ENCODE measurements at regions of chr20 and their contacts with region 1.

Region 1: DNA sequence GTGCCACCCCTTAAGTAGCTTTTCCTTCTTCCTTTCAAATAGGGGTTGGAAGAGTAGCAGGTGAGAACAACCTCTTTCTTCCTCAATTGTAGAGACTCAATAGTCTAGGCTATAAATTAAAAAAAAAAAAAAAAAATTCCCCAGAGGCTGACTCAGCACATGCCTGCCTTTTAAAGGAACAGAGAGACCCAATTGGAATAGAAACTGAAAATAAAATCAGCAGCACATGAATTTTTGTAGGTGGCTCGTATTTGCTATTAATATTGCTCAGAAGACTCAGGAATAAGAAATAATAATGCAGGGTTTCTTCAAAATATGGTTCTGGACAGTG is 19.3 kb downstream of the TOP1 start:
- DNase-seq: peak in 1 of 2 donors; percentile 63
- ATAC-seq: peak; percentile 77 to 80 (median 79)
- H3K4me3 ChIP-seq: peak overlapping the region; percentile 24
- H3K4me3 Mint-ChIP-seq: peak overlapping the region; percentile 81
- H3K27ac ChIP-seq: peak overlapping the region; percentile 67
- H3K27ac Mint-ChIP-seq: peak overlapping the region; percentile 81 to 94
- H3K4me1 ChIP-seq: peaks cover 23% of the 10 kb centered on the region
- H3K4me1 Mint-ChIP-seq: peaks cover 83 to 84% of the 10 kb centered on the region in 2 donors
- H3K27me3 ChIP-seq: no peaks in the 10 kb centered on the region
- H3K27me3 Mint-ChIP-seq: no peaks in the 10 kb centered on the region
- CTCF ChIP-seq: no peak

Region 2: DNA sequence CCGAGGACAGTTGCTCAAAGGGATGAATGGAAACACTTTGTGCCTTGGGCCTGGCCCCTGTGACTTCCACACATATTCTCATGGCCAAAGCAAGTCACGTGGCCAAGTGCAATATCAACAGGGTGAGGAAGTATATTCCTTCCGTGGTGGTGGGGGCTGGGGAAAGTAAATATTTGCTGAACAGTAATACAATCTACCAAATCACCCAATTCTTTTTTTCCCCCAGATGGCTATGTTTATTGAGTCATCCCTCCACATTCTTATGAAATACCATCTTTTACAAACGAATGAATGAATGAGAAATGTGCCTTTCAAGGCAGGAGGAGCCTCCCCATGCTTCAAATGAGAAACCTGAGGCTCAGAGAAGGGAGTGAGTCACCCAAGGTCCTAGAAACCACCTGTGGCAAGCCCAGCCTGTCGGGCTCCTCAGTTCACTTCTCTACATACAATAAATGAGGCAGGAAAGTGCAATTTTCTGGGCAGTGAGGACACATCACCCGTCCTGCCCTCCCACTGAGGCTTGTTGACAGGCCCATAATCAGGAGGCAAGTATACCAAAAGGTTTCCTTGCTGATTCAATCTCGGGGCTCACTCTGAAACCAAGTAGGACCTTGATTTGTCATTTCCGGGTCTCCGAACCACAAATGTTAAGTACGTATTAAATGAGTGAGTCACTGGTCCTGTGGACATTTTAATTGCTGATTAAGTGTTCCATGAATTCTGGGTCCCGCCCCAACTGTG is 44.6 kb before region 1 on chr20:
- intact Hi-C with region 1: loop called (anchors 1 kb)
- DNase-seq: peak; percentile 44 to 81
- ATAC-seq: peak; percentile 84 to 91 (median 86)
- H3K4me3 ChIP-seq: peak overlapping the region; percentile 16
- H3K4me3 Mint-ChIP-seq: peak overlapping the region; percentile 40
- H3K27ac ChIP-seq: peak overlapping the region; percentile 76
- H3K27ac Mint-ChIP-seq: peak overlapping the region; percentile 82 to 86
- H3K4me1 ChIP-seq: peaks cover 34% of the 10 kb centered on the region
- H3K4me1 Mint-ChIP-seq: peaks cover 16 to 20% of the 10 kb centered on the region in 2 donors
- H3K27me3 ChIP-seq: no peaks in the 10 kb centered on the region
- H3K27me3 Mint-ChIP-seq: no peaks in the 10 kb centered on the region
- CTCF ChIP-seq: no peak

Region 3: DNA sequence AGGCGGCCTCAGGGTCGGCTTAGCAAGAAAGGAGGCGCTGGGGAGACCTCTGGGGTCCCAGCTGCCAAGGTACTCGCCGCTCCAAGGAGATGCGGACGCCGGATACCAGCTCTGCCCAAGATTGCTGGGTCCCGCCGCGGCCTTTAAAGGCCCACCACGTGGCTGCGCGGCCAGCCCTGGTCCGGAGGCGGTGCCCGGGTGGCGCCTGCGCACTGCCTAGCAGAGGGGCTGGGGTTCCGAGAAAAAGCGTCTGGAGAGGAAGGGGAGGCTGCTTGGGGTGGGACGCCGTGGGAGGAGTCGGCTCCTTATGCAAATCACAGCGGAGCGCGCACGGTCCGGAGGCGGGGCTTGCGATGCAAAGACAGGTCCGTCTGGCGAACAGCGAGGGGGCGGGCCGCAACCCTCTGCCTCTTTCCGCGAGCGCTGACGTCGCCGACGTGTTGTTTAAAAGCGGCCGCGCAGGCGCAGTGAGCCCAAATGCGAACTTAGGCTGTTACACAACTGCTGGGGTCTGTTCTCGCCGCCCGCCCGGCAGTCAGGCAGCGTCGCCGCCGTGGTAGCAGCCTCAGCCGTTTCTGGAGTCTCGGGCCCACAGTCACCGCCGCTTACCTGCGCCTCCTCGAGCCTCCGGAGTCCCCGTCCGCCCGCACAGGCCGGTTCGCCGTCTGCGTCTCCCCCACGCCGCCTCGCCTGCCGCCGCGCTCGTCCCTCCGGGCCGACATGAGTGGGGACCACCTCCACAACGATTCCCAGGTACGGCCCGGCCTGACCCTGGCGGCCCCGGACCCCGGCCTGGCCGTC is 19.4 kb before region 1 on chr20 and contains the start of gene TOP1:
- intact Hi-C with region 1: loop called (anchors 2 kb)
- DNase-seq: peak; percentile 100
- ATAC-seq: peak; percentile 95 to 99 (median 96)
- H3K4me3 ChIP-seq: peak within 1 kb of the TSS; percentile 65
- H3K4me3 Mint-ChIP-seq: peak within 1 kb of the TSS; percentile 98
- H3K27ac ChIP-seq: peak within 1 kb of the TSS; percentile 81
- H3K27ac Mint-ChIP-seq: peak within 1 kb of the TSS; percentile 94 to 98
- H3K4me1 ChIP-seq: peaks cover 15% of the 10 kb centered on the region
- H3K4me1 Mint-ChIP-seq: peaks cover 41 to 47% of the 10 kb centered on the region in 2 donors
- H3K27me3 ChIP-seq: no peaks in the 10 kb centered on the region
- H3K27me3 Mint-ChIP-seq: no peaks in the 10 kb centered on the region
- CTCF ChIP-seq: no peak
- total RNA-seq, gene TOP1: 32.2 to 36.3 (median 36.3) TPM

Region 4: DNA sequence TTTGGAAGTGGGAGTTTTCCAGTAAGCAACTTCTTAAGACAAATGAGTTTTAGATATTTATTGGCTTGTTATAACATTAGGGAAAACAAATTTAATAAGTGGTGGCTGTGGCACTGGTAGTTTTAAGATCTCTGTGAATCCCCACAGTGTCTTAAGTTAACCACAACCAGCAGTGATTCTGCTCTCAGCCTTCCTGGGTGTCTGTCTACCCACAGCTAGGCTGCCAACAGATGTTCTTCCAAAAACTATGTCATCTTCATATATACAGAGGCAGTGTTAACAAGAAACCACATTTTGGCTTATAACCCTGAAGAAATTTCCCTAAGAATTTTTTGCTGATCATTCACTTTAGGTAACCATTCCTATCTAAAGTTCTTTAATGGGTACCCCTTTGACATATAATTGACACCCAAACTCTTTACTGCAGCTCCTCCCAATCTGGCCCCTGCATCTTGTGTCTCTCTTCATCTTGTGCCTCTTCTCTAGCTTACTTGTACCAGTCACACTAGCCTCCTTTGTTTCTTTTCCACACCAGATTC is 33.4 kb after region 1 on chr20:
- intact Hi-C with region 1: loop called (anchors 5 kb)
- DNase-seq: peak in 1 of 2 donors; percentile 23
- ATAC-seq: peak in 2 of 3 donors; percentile 42 to 69
- H3K4me3 ChIP-seq: no peak overlapping the region
- H3K4me3 Mint-ChIP-seq: no peak overlapping the region
- H3K27ac ChIP-seq: no peak overlapping the region
- H3K27ac Mint-ChIP-seq: peak overlapping the region in 1 of 2 donors; percentile 3
- H3K4me1 ChIP-seq: no peaks in the 10 kb centered on the region
- H3K4me1 Mint-ChIP-seq: peaks cover 26 to 27% of the 10 kb centered on the region in 2 donors
- H3K27me3 ChIP-seq: no peaks in the 10 kb centered on the region
- H3K27me3 Mint-ChIP-seq: no peaks in the 10 kb centered on the region
- CTCF ChIP-seq: no peak

Region 5: GRCh38 chr20:41969656-41970055 is 921.7 kb after region 1 on chr20:
- intact Hi-C with region 1: no loop called
- DNase-seq: no peak
- ATAC-seq: no peak
- H3K4me3 ChIP-seq: no peak overlapping the region
- H3K4me3 Mint-ChIP-seq: no peak overlapping the region
- H3K27ac ChIP-seq: no peak overlapping the region
- H3K27ac Mint-ChIP-seq: no peak overlapping the region
- H3K4me1 ChIP-seq: no peaks in the 10 kb centered on the region
- H3K4me1 Mint-ChIP-seq: no peaks in the 10 kb centered on the region
- H3K27me3 ChIP-seq: no peaks in the 10 kb centered on the region
- H3K27me3 Mint-ChIP-seq: peaks cover 3 to 10% of the 10 kb centered on the region in 2 donors
- CTCF ChIP-seq: no peak